ENCODE measurements at regions of chr19 and their contacts with region 1.

Region 1: DNA sequence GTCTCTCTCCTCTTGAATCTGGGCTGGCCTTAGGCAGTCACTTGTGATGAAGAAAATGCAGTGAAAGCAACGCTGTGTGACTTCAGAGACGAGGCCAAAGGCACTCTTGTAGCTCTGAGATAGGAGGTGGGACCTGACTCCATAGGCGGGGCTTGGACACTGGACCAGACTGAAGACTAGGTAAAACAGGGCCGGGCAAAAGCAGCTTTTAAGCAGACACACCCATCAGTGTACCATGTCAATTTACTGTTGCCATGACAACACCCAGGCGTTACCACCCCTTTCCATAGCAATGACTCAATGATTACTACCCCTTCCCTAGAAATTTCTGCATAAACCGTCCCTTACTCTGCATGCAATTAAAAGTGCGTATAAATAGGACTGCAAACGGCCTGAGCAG is 6.6 kb upstream of the EID2 start:
- DNase-seq: peak; percentile 13
- ATAC-seq: no peak
- H3K4me3 Mint-ChIP-seq: no peak overlapping the region
- H3K27ac Mint-ChIP-seq: no peak overlapping the region
- H3K4me1 Mint-ChIP-seq: peaks cover 33% of the 10 kb centered on the region
- H3K27me3 Mint-ChIP-seq: no peaks in the 10 kb centered on the region
- CTCF ChIP-seq: no peak

Region 2: DNA sequence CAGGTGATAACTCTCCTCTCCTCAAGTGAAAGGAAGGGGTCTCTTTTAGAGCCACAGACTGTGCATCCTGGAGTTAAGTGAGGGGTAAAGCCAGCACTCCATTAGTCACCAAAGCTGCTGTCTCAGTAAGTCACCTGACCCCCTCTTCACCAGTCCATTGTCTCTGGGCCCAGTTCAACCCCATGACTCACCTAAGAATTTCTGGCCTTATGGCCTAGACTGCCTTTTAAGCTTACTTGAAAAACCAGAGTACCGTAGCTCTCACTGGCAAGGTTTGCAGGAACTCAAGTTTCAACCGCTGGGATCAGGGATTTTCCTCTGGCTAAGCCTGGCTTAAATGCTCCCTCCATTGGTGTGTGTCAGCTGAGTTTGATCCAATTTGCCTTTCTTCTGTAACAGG is 16.8 kb after region 1 on chr19:
- CTCF ChIA-PET with region 1: interaction called, 17 read pairs
- POLR2A ChIA-PET with region 1: no interaction called
- intact Hi-C with region 1: no loop called
- DNase-seq: no peak
- ATAC-seq: no peak
- H3K4me3 Mint-ChIP-seq: no peak overlapping the region
- H3K27ac Mint-ChIP-seq: no peak overlapping the region
- H3K4me1 Mint-ChIP-seq: peaks cover 8% of the 10 kb centered on the region
- H3K27me3 Mint-ChIP-seq: peaks cover 4% of the 10 kb centered on the region
- CTCF ChIP-seq: no peak

Region 3: GRCh38 chr19:39671738-39672363 is 125.3 kb after region 1 on chr19:
- CTCF ChIA-PET with region 1: interaction called, 62 read pairs
- POLR2A ChIA-PET with region 1: no interaction called
- intact Hi-C with region 1: loop called (anchors 2 kb)
- DNase-seq: peak; percentile 63
- ATAC-seq: peak; percentile 58
- H3K4me3 Mint-ChIP-seq: no peak overlapping the region
- H3K27ac Mint-ChIP-seq: no peak overlapping the region
- H3K4me1 Mint-ChIP-seq: peaks cover 11% of the 10 kb centered on the region
- H3K27me3 Mint-ChIP-seq: peaks cover 15% of the 10 kb centered on the region
- CTCF ChIP-seq: peak; percentile 83